ENCODE measurements at regions of chr1 and their contacts with region 1.

Region 1: DNA sequence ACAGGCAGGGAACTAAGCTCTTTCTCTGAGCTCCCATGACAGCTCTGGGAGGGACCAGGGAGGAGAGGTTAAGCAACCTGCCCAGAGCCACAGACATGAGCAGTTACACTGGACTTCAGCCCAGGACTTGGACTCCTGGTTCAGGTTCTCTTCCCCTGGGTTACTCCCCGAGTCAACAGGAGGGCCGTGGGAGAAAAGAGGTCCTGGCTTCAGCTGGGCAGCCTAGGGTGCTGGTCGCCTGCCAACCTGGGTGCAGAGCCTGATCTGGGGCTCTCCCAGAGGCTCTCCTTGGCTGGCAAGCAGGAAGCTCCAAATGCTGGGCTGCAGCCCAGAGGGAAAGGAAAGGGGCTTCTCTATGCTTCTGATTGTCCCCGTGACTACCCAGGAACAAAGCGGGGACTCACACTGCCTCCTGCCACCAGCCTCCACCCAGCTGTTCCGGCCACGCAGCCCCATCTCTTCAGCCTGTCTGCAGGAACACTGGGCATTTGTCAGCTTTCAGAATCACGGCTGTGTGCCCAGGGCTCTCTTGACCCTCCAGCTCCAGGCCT is 141.8 kb downstream of the HIVEP3 start:
- DNase-seq: peak in 1 of 3 donors; percentile 31
- H3K4me3 ChIP-seq: no peak overlapping the region
- H3K4me3 Mint-ChIP-seq: no peak overlapping the region
- H3K27ac ChIP-seq: no peak overlapping the region
- H3K27ac Mint-ChIP-seq: peak overlapping the region in 2 of 7 donors; percentile 18 to 50
- H3K4me1 ChIP-seq: peaks cover 18% of the 10 kb centered on the region in 2 donors
- H3K4me1 Mint-ChIP-seq: peaks cover 25% of the 10 kb centered on the region
- H3K27me3 ChIP-seq: no peaks in the 10 kb centered on the region
- H3K27me3 Mint-ChIP-seq: peaks cover 0 to 6% (median 3%) of the 10 kb centered on the region in 3 donors
- CTCF ChIP-seq: no peak

Region 2: DNA sequence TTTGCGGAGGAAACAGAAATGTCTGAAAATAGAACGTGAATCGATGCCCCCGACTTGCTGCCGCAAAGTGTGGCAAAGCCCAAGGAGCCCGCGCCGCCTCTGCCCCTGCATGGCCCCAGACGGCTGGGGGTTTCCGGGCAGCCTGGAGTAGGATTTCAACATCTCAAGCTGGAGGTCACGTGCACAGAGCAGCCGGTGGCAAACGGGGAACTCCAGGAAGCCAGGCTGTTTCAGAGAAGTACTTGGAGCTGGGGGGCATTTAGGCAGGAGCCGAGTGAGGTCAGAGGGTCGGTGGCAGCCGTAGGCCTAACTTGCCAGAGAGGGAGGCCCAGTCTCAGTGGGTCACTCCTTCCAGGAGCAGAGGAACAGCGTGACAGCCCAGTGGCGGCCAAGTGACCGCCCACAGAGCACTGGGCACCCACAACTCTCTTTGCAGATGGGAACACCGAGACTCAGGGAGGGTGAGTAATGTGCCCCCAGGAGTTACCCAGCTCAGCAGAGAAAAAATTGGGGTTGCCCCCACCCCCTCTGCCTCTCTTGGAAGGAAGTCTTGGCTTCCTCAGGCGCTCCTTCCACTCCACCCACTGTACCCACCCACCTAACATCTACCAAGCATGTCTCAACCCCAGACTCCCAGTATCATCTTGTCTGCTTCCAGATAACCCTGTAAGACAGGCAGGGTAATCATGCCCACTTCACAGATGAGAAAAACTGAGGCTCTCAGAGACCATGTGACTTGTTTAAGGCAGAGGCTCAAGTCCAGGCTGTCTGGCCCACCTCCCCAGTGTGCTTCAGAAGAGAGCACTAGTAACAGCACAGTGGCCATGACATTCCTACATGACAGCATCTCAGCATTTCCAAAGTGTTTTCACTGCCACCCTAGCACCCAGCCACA is 37.7 kb before region 1 on chr1:
- intact Hi-C with region 1: loop called in 1 of 2 experiments (anchors 5 kb)
- DNase-seq: peak; percentile 97 to 99 (median 97)
- H3K4me3 ChIP-seq: peak overlapping the region; percentile 5 to 57 (median 32)
- H3K4me3 Mint-ChIP-seq: peak overlapping the region; percentile 72 to 83
- H3K27ac ChIP-seq: peak overlapping the region; percentile 98 to 99
- H3K27ac Mint-ChIP-seq: peak overlapping the region; percentile 99 to 100 (median 99)
- H3K4me1 ChIP-seq: peaks cover 84 to 92% of the 10 kb centered on the region in 2 donors
- H3K4me1 Mint-ChIP-seq: peaks cover 96% of the 10 kb centered on the region
- H3K27me3 ChIP-seq: no peaks in the 10 kb centered on the region
- H3K27me3 Mint-ChIP-seq: peaks cover 0 to 2% (median 0%) of the 10 kb centered on the region in 3 donors
- CTCF ChIP-seq: no peak

Region 3: GRCh38 chr1:41765152-41765551 is 11.8 kb before region 1 on chr1:
- intact Hi-C with region 1: no loop called
- DNase-seq: peak; percentile 69 to 81 (median 77)
- H3K4me3 ChIP-seq: peak overlapping the region; percentile 19 to 66 (median 26)
- H3K4me3 Mint-ChIP-seq: peak overlapping the region; percentile 65 to 73
- H3K27ac ChIP-seq: peak overlapping the region; percentile 84 to 94
- H3K27ac Mint-ChIP-seq: peak overlapping the region; percentile 94 to 98 (median 96)
- H3K4me1 ChIP-seq: peaks cover 71 to 82% of the 10 kb centered on the region in 2 donors
- H3K4me1 Mint-ChIP-seq: peaks cover 86% of the 10 kb centered on the region
- H3K27me3 ChIP-seq: no peaks in the 10 kb centered on the region
- H3K27me3 Mint-ChIP-seq: peaks cover 0 to 2% (median 0%) of the 10 kb centered on the region in 3 donors
- CTCF ChIP-seq: no peak

Measured in CD14-positive monocyte (primary cell).